CD8-positive, alpha-beta T cell (primary cell): ENCODE measurements at regions of chr16 and their contacts with region 1.

Region 1: DNA sequence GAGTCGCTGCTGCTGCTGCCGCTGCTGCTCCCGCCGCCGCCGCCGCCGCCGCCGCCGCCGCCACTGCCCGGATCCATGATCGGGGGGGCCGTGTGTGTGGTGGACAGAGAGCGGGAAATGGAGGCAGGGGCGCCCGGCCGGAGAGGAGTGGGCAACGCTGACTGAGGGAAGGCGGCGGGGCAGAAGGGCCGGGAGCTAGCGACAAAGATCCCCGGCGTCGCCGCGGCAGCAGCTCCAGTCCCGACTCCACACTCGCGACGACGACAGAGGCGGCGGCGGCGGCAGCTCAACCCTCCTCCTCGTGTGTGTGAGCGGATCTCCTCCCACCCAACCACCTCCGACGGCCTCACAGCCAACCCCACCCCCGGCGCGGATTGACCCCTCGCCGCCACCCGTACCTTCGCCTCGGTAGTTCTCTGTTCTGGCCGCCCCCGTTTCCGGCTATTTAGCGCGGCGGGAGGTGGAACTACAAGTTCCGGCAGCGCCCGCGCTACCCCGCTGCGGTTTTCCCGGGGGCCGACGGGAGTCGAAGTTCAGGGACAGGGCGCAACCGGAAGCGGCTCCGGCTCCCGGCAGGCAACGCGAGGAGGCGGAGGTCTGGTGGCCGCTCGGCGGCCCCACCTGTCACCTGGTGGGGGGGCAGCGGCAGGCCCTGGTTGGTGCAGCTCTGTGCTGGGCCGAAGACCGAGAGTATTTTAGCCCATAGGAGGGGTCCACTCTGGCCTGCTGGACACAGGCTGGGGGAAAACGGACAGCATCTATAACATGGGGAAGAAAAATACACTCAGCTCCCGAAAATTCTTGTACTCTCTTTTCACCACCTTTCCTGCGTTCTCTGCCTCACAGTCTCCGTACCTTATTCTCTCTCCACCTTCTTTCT is at the start of gene GSPT1:
- DNase-seq: peak; percentile 98 to 100 (median 99)
- ATAC-seq: peak; percentile 89
- H3K4me3 ChIP-seq: peak within 1 kb of the TSS; percentile 52 to 68
- H3K4me3 Mint-ChIP-seq: peak within 1 kb of the TSS; percentile 94
- H3K27ac ChIP-seq: peak within 1 kb of the TSS; percentile 68 to 75
- H3K27ac Mint-ChIP-seq: peak within 1 kb of the TSS; percentile 98
- H3K4me1 ChIP-seq: peaks cover 24% of the 10 kb centered on the region
- H3K4me1 Mint-ChIP-seq: peaks cover 29% of the 10 kb centered on the region
- H3K27me3 ChIP-seq: no peaks in the 10 kb centered on the region
- H3K27me3 Mint-ChIP-seq: no peaks in the 10 kb centered on the region
- CTCF ChIP-seq: no peak
- total RNA-seq, gene GSPT1: 296 to 297 TPM

Region 2: DNA sequence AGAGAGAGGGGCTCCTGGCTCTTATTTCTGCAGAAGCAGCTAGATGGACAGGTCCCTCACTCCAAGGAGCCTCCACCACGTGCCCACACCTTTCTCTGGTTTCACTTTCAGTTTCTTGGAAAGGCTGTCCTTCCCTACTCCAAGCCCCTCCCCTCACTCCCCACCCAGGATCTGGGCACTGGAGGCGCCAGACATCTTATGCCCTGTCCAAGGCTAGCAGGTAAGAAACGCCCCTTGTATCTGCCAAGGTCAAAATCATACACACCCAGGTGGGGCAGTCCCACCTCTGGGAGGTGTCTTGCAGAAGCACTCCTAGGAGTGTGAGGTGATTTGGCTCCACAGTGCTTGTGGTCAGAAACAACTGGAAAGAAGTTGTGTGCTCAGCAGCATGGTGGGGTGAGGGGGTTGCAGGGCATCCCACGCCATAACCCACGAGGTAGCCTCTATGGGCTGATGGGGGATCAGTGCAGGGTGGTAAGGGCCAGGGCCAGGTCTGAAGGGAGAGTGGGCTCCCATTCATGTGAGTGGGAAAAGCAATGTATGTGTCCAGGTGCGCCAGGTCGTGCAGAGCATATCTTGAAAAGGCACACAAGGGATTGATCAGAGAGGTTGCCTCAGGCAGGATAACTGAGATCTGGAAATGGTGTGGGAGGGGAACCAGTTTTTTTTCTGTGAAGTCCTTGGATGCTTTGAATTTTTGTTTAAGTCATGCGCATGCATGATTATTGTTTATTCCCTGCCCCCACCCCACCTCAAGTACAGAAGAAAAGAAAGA is 603.0 kb before region 1 on chr16:
- CTCF ChIA-PET with region 1: no interaction called
- POLR2A ChIA-PET with region 1: no interaction called
- intact Hi-C with region 1: no loop called
- DNase-seq: peak in 3 of 9 experiments; percentile 28 to 58 (median 33)
- ATAC-seq: peak; percentile 16
- H3K4me3 ChIP-seq: no peak overlapping the region
- H3K4me3 Mint-ChIP-seq: peak overlapping the region; percentile 20
- H3K27ac ChIP-seq: no peak overlapping the region
- H3K27ac Mint-ChIP-seq: peak overlapping the region; percentile 41
- H3K4me1 ChIP-seq: peaks cover 48% of the 10 kb centered on the region
- H3K4me1 Mint-ChIP-seq: peaks cover 48% of the 10 kb centered on the region
- H3K27me3 ChIP-seq: no peaks in the 10 kb centered on the region
- H3K27me3 Mint-ChIP-seq: no peaks in the 10 kb centered on the region
- CTCF ChIP-seq: no peak

Region 3: DNA sequence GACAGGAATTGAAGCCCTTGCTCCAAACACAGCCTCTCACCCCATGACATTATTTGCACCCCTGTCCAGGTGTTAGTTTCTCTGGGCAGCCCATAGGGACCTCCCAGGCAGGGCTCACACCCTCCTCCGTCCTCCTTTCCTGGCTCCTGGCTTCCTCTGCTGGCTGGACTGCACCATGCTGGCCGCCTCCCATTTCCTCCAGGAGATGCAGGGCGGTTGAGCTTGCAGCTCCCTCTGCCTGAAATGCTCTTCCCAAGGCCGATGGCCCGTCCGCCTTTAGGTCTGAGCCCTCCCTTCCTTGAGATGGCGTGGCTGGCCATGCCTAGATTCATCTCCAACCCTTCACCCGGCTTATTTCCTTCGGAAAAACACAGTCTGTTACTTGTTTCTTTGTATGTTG is 395.4 kb after region 1 on chr16:
- CTCF ChIA-PET with region 1: no interaction called
- POLR2A ChIA-PET with region 1: no interaction called
- intact Hi-C with region 1: no loop called
- DNase-seq: no peak
- ATAC-seq: no peak
- H3K4me3 ChIP-seq: no peak overlapping the region
- H3K4me3 Mint-ChIP-seq: no peak overlapping the region
- H3K27ac ChIP-seq: no peak overlapping the region
- H3K27ac Mint-ChIP-seq: no peak overlapping the region
- H3K4me1 ChIP-seq: no peaks in the 10 kb centered on the region
- H3K4me1 Mint-ChIP-seq: peaks cover 2% of the 10 kb centered on the region
- H3K27me3 ChIP-seq: no peaks in the 10 kb centered on the region
- H3K27me3 Mint-ChIP-seq: no peaks in the 10 kb centered on the region
- CTCF ChIP-seq: no peak

Region 4: DNA sequence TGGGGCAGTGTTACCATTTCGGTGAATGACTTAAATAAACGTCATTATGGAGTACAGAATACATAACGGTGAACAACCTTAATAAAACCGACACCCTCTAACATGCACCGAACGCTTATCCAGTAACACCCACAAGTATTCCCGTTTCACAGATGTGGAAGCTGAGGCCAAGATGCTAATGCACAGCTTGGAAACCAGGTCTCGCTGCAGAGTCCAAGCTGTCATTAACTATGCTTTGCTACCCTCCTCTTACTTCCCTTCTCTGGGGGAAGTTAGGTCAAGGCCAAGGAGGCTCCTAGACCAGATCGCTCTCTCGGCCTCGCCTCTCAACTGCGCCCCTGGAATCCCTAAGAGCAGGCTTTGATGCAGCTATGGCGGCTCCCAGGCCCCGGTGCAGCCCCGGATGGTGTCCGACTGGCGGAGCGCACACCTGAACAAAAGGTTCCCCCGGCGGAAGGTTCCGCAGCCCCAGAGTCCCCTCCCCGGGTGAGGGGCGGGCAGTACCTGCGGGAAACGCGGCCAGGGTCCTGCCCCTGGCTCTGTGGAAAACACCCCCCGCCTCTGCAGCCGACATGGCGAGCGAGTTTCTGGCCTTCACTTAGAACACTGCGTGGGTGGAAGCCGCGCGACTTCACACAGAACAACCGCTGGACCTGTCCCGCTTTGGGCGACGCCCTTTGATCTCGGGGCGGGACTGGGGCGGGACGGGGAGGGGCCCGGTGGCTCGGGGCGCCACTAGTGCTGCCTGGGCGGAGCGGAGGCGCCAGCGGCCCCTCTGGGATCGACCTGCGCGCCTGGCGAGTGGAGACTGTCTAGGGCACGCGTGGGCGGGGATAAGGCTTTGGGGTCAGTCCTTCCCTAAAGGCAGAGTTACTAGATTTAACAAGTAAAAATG is 887.6 kb after region 1 on chr16 and contains the start of gene CPPED1:
- CTCF ChIA-PET with region 1: no interaction called
- POLR2A ChIA-PET with region 1: no interaction called
- intact Hi-C with region 1: loop called in 1 of 2 experiments (anchors 5 kb)
- DNase-seq: peak; percentile 83 to 95 (median 88)
- ATAC-seq: peak; percentile 94
- H3K4me3 ChIP-seq: peak within 1 kb of the TSS; percentile 71 to 86
- H3K4me3 Mint-ChIP-seq: peak within 1 kb of the TSS; percentile 88
- H3K27ac ChIP-seq: peak within 1 kb of the TSS; percentile 55 to 87
- H3K27ac Mint-ChIP-seq: peak within 1 kb of the TSS; percentile 92
- H3K4me1 ChIP-seq: peaks cover 9% of the 10 kb centered on the region
- H3K4me1 Mint-ChIP-seq: peaks cover 22% of the 10 kb centered on the region
- H3K27me3 ChIP-seq: no peaks in the 10 kb centered on the region
- H3K27me3 Mint-ChIP-seq: peaks cover 3% of the 10 kb centered on the region
- CTCF ChIP-seq: no peak
- total RNA-seq, gene CPPED1: 0.89 to 1.1 TPM